IMR-90 (cell line): ENCODE measurements at regions of chr3 and their contacts with region 1.

Region 1: GRCh38 chr3:195337747-195338146 is 66.8 kb upstream of the XXYLT1 start:
- DNase-seq: no peak
- ATAC-seq: no peak
- H3K4me3 ChIP-seq: no peak overlapping the region
- H3K27ac ChIP-seq: no peak overlapping the region
- H3K4me1 ChIP-seq: no peaks in the 10 kb centered on the region
- H3K27me3 ChIP-seq: no peaks in the 10 kb centered on the region
- CTCF ChIP-seq: no peak
- POLR2A ChIP-seq: no peak
- RAD21 ChIP-seq: no peak

Region 2: GRCh38 chr3:195080571-195081151 is 257.1 kb before region 1 on chr3:
- CTCF ChIA-PET with region 1: no interaction called
- POLR2A ChIA-PET with region 1: no interaction called
- dilution Hi-C with region 1: no loop called
- in situ Hi-C with region 1: no loop called
- intact Hi-C with region 1: no loop called
- DNase-seq: no peak
- ATAC-seq: no peak
- H3K4me3 ChIP-seq: no peak overlapping the region
- H3K27ac ChIP-seq: no peak overlapping the region
- H3K4me1 ChIP-seq: peaks cover 20% of the 10 kb centered on the region
- H3K27me3 ChIP-seq: no peaks in the 10 kb centered on the region
- CTCF ChIP-seq: no peak
- POLR2A ChIP-seq: no peak
- RAD21 ChIP-seq: no peak

Region 3: GRCh38 chr3:195307711-195308110 is 30.0 kb before region 1 on chr3:
- CTCF ChIA-PET with region 1: no interaction called
- POLR2A ChIA-PET with region 1: no interaction called
- dilution Hi-C with region 1: no loop called
- in situ Hi-C with region 1: no loop called
- intact Hi-C with region 1: loop called (anchors 5 kb)
- DNase-seq: no peak
- ATAC-seq: no peak
- H3K4me3 ChIP-seq: no peak overlapping the region
- H3K27ac ChIP-seq: no peak overlapping the region
- H3K4me1 ChIP-seq: peaks cover 4% of the 10 kb centered on the region
- H3K27me3 ChIP-seq: no peaks in the 10 kb centered on the region
- CTCF ChIP-seq: no peak
- POLR2A ChIP-seq: no peak
- RAD21 ChIP-seq: no peak